Adrenal gland (tissue), 19 donors: ENCODE measurements at regions of chr4 and their contacts with region 1.

Region 1: GRCh38 chr4:89906777-89907521 is 12.3 kb downstream of the MMRN1 start:
- DNase-seq: no peak
- H3K4me3 ChIP-seq: no peak overlapping the region
- H3K27ac ChIP-seq: no peak overlapping the region
- H3K4me1 ChIP-seq: no peaks in the 10 kb centered on the region
- H3K27me3 ChIP-seq: peaks cover 17% of the 10 kb centered on the region
- CTCF ChIP-seq: no peak
- POLR2A ChIP-seq: no peak

Region 2: DNA sequence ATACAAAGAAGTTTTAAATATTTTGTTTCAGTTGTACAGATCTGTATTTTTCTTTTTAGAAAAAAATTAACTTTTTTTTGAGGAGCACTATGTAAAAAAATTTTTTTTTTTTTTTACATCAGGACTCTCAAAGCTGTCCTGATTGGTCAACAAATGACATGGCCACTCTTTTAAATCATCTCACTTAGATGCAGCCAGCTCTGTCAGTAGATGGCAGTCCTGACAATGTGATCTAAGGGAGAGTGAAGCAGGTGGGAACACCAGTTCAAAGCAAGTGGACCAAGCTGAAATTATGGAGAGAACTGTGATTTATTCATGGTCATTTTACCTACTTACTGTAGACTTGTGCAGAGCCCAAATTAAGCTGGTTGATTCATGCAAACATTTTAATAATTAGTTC is 424.7 kb before region 1 on chr4:
- intact Hi-C with region 1: loop called in 1 of 2 experiments (anchors 5 kb)
- DNase-seq: peak in 1 of 7 donors; percentile 18
- H3K4me3 ChIP-seq: no peak overlapping the region
- H3K27ac ChIP-seq: no peak overlapping the region
- H3K4me1 ChIP-seq: no peaks in the 10 kb centered on the region
- H3K27me3 ChIP-seq: no peaks in the 10 kb centered on the region
- CTCF ChIP-seq: peak in 2 of 6 experiments; percentile 24 to 32
- POLR2A ChIP-seq: no peak

Region 3: DNA sequence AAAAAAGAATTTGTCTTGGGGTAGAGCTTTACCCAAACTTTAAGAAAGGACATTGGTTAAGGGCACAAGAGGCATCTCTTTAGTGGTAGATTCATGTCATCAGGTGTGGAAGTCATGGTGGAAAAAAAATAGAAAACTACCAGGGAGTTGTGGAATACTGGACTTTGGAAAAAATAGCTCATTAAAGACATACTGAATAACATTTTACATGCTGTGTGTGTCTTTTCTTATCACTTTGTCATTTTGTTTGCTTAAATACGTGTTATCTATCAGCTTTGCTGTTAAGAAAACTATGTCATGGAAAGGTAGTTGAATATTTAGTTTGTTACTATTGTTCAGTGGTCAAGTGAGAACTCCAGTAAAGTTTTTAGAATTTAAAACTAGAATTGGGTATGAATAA is 367.2 kb after region 1 on chr4:
- intact Hi-C with region 1: no loop called
- DNase-seq: no peak
- H3K4me3 ChIP-seq: no peak overlapping the region
- H3K27ac ChIP-seq: no peak overlapping the region
- H3K4me1 ChIP-seq: no peaks in the 10 kb centered on the region
- H3K27me3 ChIP-seq: no peaks in the 10 kb centered on the region
- CTCF ChIP-seq: no peak
- POLR2A ChIP-seq: no peak